Calu3 (cell line): ENCODE measurements at regions of chr2 and their contacts with region 1.

Region 1: GRCh38 chr2:162022290-162022945 is 51.6 kb downstream of the DPP4 start:
- DNase-seq: peak; percentile 12
- H3K4me3 Mint-ChIP-seq: no peak overlapping the region
- H3K27ac Mint-ChIP-seq: peak overlapping the region; percentile 12
- H3K4me1 Mint-ChIP-seq: peaks cover 32% of the 10 kb centered on the region
- H3K27me3 Mint-ChIP-seq: no peaks in the 10 kb centered on the region
- CTCF ChIP-seq: no peak

Region 2: DNA sequence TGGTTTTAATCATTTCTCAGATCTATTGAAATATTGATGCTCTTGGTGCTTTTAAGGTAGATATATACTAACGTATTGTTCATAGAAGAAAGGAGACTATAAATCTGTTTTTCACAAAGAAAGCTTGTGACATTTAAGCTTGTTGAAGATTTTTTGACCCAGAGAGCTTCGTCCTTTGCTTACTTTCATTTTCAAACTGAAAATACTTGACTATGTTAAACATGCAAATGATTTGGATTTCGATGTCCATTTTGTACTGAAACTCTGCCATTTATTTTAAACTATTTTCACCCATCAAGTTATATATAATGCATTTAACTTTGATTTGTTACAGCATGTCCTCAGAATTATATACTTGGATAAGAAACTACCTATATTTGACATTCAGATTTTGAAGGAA is 313.0 kb before region 1 on chr2:
- CTCF ChIA-PET with region 1: no interaction called
- intact Hi-C with region 1: no loop called
- DNase-seq: no peak
- H3K4me3 Mint-ChIP-seq: no peak overlapping the region
- H3K27ac Mint-ChIP-seq: no peak overlapping the region
- H3K4me1 Mint-ChIP-seq: no peaks in the 10 kb centered on the region
- H3K27me3 Mint-ChIP-seq: no peaks in the 10 kb centered on the region
- CTCF ChIP-seq: no peak

Region 3: GRCh38 chr2:162007447-162008040 is 14.9 kb before region 1 on chr2:
- CTCF ChIA-PET with region 1: no interaction called
- intact Hi-C with region 1: no loop called
- DNase-seq: no peak
- H3K4me3 Mint-ChIP-seq: no peak overlapping the region
- H3K27ac Mint-ChIP-seq: no peak overlapping the region
- H3K4me1 Mint-ChIP-seq: no peaks in the 10 kb centered on the region
- H3K27me3 Mint-ChIP-seq: no peaks in the 10 kb centered on the region
- CTCF ChIP-seq: peak; percentile 15

Region 4: DNA sequence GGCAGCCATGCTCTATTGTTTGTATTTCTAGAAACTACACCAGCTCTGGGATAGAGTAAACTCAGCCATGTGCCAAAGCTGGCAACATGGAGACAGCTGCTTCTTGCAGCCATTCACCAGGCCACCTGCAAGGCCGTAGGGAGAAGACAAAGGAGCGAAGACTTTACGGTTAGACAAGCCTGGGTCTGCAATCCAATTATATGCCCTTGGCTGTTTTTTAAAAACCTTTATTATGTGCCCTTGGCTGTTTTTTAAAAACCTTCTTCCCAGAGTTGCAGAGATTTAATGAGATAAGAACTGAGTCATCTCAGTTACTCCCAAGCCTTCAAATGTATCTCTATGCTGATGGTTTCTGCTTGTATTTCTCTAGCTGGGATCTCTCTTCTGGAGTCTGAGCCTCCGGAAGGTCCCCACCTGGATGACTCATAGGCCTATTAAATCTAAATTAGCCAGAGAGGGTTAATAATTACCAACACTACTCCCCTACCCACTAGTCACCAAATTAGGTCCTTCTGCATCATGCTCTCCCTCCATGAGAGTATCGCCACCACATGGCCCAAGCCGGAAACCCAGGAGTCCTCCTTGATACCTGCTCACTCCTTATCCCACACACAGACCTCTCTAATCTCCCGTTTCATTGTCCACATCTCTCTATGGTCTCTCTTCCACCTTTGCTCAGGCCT is 69.0 kb after region 1 on chr2:
- CTCF ChIA-PET with region 1: interaction called, 3 read pairs
- intact Hi-C with region 1: loop called (anchors 5 kb)
- DNase-seq: peak; percentile 82
- H3K4me3 Mint-ChIP-seq: no peak overlapping the region
- H3K27ac Mint-ChIP-seq: peak overlapping the region; percentile 66
- H3K4me1 Mint-ChIP-seq: peaks cover 47% of the 10 kb centered on the region
- H3K27me3 Mint-ChIP-seq: no peaks in the 10 kb centered on the region
- CTCF ChIP-seq: no peak

Region 5: DNA sequence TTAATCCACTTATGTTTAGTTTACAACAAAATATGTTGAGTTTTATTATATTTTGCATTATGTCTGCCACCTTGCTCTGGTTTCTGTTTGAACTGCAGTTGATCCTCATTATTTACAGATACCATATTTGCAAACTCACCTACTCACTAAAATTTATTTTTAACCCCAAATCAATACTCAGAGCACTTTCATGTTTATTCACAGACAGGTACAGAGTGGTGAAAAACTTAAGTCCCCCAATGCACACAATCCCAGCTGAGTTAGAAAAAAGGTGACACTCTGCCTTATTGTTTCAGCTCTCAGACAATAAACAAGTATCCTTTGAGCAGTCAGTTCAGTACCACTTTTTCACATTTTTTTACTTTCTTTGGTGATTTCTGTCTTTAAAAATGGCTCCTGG is 115.9 kb after region 1 on chr2:
- CTCF ChIA-PET with region 1: no interaction called
- intact Hi-C with region 1: no loop called
- DNase-seq: no peak
- H3K4me3 Mint-ChIP-seq: no peak overlapping the region
- H3K27ac Mint-ChIP-seq: no peak overlapping the region
- H3K4me1 Mint-ChIP-seq: peaks cover 7% of the 10 kb centered on the region
- H3K27me3 Mint-ChIP-seq: no peaks in the 10 kb centered on the region
- CTCF ChIP-seq: no peak

Region 6: DNA sequence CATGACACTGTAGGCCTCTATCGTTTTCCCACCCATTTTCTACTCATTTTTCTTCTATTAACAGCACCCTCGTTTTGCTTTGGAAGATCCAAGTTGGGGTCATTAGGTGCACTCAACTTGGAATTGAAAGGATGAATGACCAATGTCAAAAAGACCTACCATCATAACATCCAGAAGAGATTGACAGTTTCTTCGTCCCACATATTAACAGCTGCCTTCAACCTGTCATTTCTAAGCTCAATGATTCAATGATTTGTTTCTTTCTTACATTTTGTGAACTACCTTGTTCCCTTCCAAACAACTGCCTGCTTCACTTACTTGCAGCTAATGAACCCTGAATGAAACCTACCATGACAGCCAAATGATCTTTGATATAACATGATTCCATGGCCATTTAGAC is 1040.1 kb after region 1 on chr2:
- CTCF ChIA-PET with region 1: no interaction called
- intact Hi-C with region 1: no loop called
- DNase-seq: no peak
- H3K4me3 Mint-ChIP-seq: no peak overlapping the region
- H3K27ac Mint-ChIP-seq: no peak overlapping the region
- H3K4me1 Mint-ChIP-seq: no peaks in the 10 kb centered on the region
- H3K27me3 Mint-ChIP-seq: no peaks in the 10 kb centered on the region
- CTCF ChIP-seq: no peak